CD4-positive, alpha-beta T cell (primary cell): ENCODE measurements at regions of chr17 and their contacts with region 1.

Region 1: DNA sequence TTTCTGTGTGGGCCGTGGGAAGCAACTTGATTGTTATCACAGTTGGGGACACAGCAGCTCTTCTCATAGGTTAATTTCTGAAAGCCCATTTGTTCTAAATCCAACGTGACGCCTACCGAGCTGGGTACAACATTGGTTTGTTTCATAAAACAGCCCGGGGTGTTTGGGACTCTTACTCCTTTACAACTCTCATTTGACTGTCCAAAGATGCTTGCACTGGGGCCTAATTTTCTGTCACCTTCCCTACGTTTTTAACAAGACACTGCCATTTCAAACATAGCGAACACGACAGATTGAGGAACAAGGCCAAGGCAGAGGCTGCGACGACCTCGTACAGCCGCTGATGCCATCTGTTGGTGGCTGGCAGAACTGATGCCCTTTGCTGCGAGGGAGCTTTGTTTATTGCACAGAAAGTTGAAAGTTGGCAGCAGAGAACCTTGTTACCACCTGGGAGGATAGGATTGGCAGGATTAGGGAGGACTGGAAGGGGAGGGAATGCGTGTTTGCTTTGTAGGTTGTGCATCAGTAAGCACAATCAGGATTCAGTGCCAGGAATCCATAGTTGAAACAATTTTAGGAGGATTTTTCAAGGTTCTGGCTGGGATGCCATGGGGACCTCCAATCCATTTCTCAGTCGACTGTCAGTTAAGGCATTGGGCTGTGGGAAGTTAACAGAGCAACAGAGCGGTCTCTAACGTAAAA is 98.3 kb downstream of the PITPNC1 start:
- DNase-seq: peak; percentile 79 to 94 (median 84)
- ATAC-seq: peak; percentile 86
- H3K4me3 ChIP-seq: peak overlapping the region; percentile 35
- H3K4me3 Mint-ChIP-seq: peak overlapping the region; percentile 74
- H3K27ac ChIP-seq: peak overlapping the region; percentile 66 to 73
- H3K27ac Mint-ChIP-seq: peak overlapping the region; percentile 96
- H3K4me1 ChIP-seq: peaks cover 64% of the 10 kb centered on the region
- H3K4me1 Mint-ChIP-seq: peaks cover 66% of the 10 kb centered on the region
- H3K27me3 ChIP-seq: no peaks in the 10 kb centered on the region
- H3K27me3 Mint-ChIP-seq: no peaks in the 10 kb centered on the region
- CTCF ChIP-seq: peak; percentile 96

Region 2: DNA sequence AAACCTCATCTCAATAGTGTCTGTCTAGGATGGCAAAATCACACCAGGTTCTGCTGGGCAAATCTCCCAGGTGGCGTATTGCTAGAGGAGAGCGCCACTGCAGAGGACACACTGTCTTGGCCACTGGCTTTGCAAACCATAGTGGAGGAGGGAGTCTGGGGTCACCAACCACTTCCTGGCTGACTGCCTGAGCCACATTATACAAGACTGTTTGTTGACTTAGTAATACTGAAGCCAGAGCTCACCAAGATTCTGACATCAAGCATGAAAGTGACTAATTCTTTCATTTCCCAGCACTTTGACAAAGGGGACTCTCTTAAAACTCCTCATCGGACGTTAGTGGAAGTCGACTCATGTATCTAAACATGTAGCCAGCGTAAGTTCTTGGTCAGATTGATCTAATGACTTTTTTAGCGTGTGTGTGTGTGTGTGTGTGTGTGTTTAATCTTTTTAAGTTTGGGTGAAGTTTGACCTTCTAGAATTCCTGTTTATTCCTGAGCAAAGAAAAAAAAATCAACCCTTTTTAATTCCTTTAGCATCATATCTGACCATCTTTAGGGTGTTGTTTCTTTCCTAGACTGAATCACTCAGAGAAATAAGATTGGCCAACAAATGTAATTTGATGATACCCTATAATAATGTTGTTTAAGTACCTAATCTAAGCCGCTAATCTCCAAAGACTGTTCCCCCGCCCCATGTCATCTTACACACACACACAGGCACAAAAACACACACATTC is 84.6 kb before region 1 on chr17:
- CTCF ChIA-PET with region 1: interaction called, 53 read pairs
- POLR2A ChIA-PET with region 1: interaction called, 14 read pairs
- intact Hi-C with region 1: loop called (anchors 1 kb)
- DNase-seq: peak; percentile 39 to 83 (median 60)
- ATAC-seq: peak; percentile 82
- H3K4me3 ChIP-seq: peak overlapping the region; percentile 20
- H3K4me3 Mint-ChIP-seq: peak overlapping the region; percentile 86
- H3K27ac ChIP-seq: peak overlapping the region; percentile 50 to 55
- H3K27ac Mint-ChIP-seq: peak overlapping the region; percentile 92
- H3K4me1 ChIP-seq: peaks cover 56% of the 10 kb centered on the region
- H3K4me1 Mint-ChIP-seq: peaks cover 78% of the 10 kb centered on the region
- H3K27me3 ChIP-seq: no peaks in the 10 kb centered on the region
- H3K27me3 Mint-ChIP-seq: no peaks in the 10 kb centered on the region
- CTCF ChIP-seq: no peak

Region 3: GRCh38 chr17:67421869-67422273 is 53.5 kb before region 1 on chr17:
- CTCF ChIA-PET with region 1: interaction called, 35 read pairs
- POLR2A ChIA-PET with region 1: interaction called, 13 read pairs
- intact Hi-C with region 1: loop called (anchors 1 to 10 kb)
- DNase-seq: peak in 11 of 14 experiments; percentile 22 to 94 (median 61)
- ATAC-seq: peak; percentile 93
- H3K4me3 ChIP-seq: no peak overlapping the region
- H3K4me3 Mint-ChIP-seq: peak overlapping the region; percentile 16
- H3K27ac ChIP-seq: peak overlapping the region; percentile 68 to 88
- H3K27ac Mint-ChIP-seq: peak overlapping the region; percentile 87
- H3K4me1 ChIP-seq: peaks cover 80% of the 10 kb centered on the region
- H3K4me1 Mint-ChIP-seq: peaks cover 90% of the 10 kb centered on the region
- H3K27me3 ChIP-seq: no peaks in the 10 kb centered on the region
- H3K27me3 Mint-ChIP-seq: no peaks in the 10 kb centered on the region
- CTCF ChIP-seq: no peak

Region 4: DNA sequence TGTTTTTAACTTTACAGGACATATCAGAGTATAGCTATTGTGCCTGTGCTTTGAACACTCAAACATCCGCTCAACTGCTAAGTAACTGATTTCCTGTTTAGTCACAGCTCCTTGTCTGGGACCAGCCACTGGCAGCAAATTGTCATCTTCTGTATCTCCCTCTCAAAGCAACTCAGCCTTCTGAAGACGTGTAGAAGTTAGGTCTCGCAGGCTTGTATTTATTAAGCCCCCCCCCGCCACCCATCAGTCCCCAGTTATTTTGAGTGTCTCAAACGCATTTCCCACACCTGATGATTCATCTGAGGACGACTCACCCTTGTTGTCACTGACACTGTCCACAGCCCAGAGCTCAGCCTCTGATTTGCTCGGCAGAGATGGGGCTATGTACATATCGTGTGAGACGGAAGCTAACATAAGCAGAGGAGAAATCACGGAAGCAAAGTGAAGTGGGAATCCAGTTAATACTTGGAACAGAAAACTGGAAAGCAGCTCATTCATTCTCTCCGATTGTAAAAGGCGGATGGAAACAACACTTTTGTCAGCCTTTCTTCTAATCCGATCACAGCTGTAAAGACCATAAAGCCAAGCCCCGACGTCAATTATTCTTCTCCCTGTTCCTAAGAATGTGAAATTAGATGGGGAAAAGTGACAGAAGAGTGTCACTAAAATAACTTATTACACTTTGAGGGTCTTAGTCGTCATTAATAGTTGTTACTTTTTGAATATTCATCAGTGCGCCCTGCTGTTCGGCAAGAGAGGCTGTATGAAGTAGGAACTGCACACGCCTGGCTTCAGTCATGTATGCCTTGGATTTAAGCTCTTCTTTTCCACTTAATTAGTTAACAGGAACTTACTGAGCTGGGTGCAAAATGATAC is 34.1 kb before region 1 on chr17:
- CTCF ChIA-PET with region 1: interaction called, 80 read pairs
- POLR2A ChIA-PET with region 1: interaction called, 91 read pairs
- intact Hi-C with region 1: loop called (anchors 1 kb)
- DNase-seq: peak; percentile 65 to 93 (median 79)
- ATAC-seq: peak; percentile 86
- H3K4me3 ChIP-seq: peak overlapping the region; percentile 43
- H3K4me3 Mint-ChIP-seq: peak overlapping the region; percentile 80
- H3K27ac ChIP-seq: peak overlapping the region; percentile 89 to 93
- H3K27ac Mint-ChIP-seq: peak overlapping the region; percentile 91
- H3K4me1 ChIP-seq: peaks cover 94% of the 10 kb centered on the region
- H3K4me1 Mint-ChIP-seq: peaks cover 89% of the 10 kb centered on the region
- H3K27me3 ChIP-seq: no peaks in the 10 kb centered on the region
- H3K27me3 Mint-ChIP-seq: no peaks in the 10 kb centered on the region
- CTCF ChIP-seq: no peak

Region 5: GRCh38 chr17:67459870-67460455 is 15.4 kb before region 1 on chr17:
- CTCF ChIA-PET with region 1: interaction called, 21 read pairs
- POLR2A ChIA-PET with region 1: interaction called, 22 read pairs
- intact Hi-C with region 1: loop called in 1 of 2 experiments (anchors 2 kb)
- DNase-seq: no peak
- ATAC-seq: no peak
- H3K4me3 ChIP-seq: no peak overlapping the region
- H3K4me3 Mint-ChIP-seq: no peak overlapping the region
- H3K27ac ChIP-seq: no peak overlapping the region
- H3K27ac Mint-ChIP-seq: peak overlapping the region; percentile 60
- H3K4me1 ChIP-seq: peaks cover 55% of the 10 kb centered on the region
- H3K4me1 Mint-ChIP-seq: peaks cover 74% of the 10 kb centered on the region
- H3K27me3 ChIP-seq: no peaks in the 10 kb centered on the region
- H3K27me3 Mint-ChIP-seq: no peaks in the 10 kb centered on the region
- CTCF ChIP-seq: no peak

Region 6: GRCh38 chr17:67584991-67585602 is 109.7 kb after region 1 on chr17:
- CTCF ChIA-PET with region 1: no interaction called
- POLR2A ChIA-PET with region 1: no interaction called
- intact Hi-C with region 1: no loop called
- DNase-seq: no peak
- ATAC-seq: no peak
- H3K4me3 ChIP-seq: no peak overlapping the region
- H3K4me3 Mint-ChIP-seq: no peak overlapping the region
- H3K27ac ChIP-seq: no peak overlapping the region
- H3K27ac Mint-ChIP-seq: peak overlapping the region; percentile 24
- H3K4me1 ChIP-seq: no peaks in the 10 kb centered on the region
- H3K4me1 Mint-ChIP-seq: peaks cover 10% of the 10 kb centered on the region
- H3K27me3 ChIP-seq: no peaks in the 10 kb centered on the region
- H3K27me3 Mint-ChIP-seq: no peaks in the 10 kb centered on the region
- CTCF ChIP-seq: no peak

Region 7: DNA sequence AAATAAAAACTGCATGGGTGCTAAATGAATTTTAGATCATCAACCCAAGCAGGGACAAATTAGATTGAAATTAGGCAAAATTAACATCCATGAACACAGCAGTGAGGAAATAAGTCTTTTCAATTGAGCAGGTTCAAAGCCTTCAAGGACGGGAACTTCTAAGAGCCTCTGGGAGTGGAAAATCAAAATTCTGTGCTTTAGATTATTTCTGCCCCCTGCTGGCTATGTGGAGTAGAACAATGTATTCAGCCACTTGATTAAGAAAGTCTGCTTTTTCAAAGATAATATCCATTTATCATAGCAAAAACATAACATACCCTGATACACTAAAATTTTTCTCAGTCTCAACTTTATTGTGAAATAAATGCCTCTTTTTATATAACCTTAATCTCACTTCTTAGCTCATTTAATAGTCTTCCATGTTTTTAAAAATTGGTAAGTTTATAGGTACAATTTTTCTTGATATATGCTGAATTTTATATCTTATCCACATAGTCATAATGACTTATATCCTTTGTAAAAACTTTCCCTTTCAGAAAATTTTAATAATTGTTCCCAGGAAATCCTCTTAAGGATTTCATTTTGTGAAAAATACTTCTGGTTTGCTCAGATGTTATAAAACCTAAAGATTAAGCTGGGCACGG is 214.3 kb after region 1 on chr17:
- CTCF ChIA-PET with region 1: no interaction called
- POLR2A ChIA-PET with region 1: interaction called, 3 read pairs
- intact Hi-C with region 1: loop called (anchors 2 to 5 kb)
- DNase-seq: peak in 10 of 14 experiments; percentile 10 to 77 (median 32)
- ATAC-seq: peak; percentile 67
- H3K4me3 ChIP-seq: no peak overlapping the region
- H3K4me3 Mint-ChIP-seq: no peak overlapping the region
- H3K27ac ChIP-seq: no peak overlapping the region
- H3K27ac Mint-ChIP-seq: no peak overlapping the region
- H3K4me1 ChIP-seq: no peaks in the 10 kb centered on the region
- H3K4me1 Mint-ChIP-seq: peaks cover 6% of the 10 kb centered on the region
- H3K27me3 ChIP-seq: no peaks in the 10 kb centered on the region
- H3K27me3 Mint-ChIP-seq: no peaks in the 10 kb centered on the region
- CTCF ChIP-seq: peak; percentile 84